Mammary epithelial cell (primary cell): ENCODE measurements at regions of chr10 and their contacts with region 1.

Region 1: GRCh38 chr10:75941223-75941801 is 509.9 kb downstream of the LRMDA start:
- DNase-seq: no peak
- H3K4me3 ChIP-seq: no peak overlapping the region
- H3K27ac ChIP-seq: no peak overlapping the region
- H3K4me1 ChIP-seq: no peaks in the 10 kb centered on the region
- H3K27me3 ChIP-seq: no peaks in the 10 kb centered on the region
- CTCF ChIP-seq: no peak

Region 2: DNA sequence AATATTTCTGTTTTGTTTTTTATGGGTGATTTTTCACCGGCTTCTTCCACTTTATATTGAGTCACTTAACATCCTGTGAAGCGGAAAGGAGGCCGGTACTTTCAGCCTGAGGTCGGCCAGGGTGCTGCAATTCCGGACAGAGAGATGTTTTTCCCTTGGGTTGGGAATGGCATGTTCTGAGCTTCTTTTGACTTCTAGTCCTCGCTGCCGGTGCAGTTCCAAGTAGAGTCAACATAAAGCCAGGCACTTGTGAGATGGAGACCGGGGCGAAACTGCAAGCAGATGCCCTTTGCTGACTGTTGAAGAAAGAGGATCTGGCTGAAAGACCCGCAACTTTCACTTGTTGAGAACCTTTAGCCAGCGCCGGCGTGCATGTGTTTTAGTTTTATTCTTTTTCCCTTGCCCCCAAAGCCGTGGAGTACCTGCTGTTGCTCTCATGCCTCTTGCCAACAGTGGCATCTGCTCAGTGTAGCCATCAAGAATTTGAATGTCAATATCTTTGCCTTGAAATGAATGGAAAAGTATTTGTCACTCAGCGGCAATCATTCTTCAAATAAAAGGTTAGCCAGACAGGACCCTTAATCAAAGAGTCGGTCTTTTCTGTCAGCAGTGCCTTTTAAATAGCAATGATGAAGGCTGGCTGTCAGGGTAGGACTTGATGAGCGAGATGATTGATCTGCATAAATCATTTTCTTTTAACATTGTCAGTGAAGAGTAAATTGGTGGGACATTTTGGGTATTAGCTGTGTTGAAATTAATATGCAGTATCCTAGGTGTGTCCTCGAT is 158.7 kb before region 1 on chr10:
- CTCF ChIA-PET with region 1: no interaction called
- dilution Hi-C with region 1: no loop called
- in situ Hi-C with region 1: no loop called
- intact Hi-C with region 1: no loop called
- DNase-seq: no peak
- H3K4me3 ChIP-seq: no peak overlapping the region
- H3K27ac ChIP-seq: no peak overlapping the region
- H3K4me1 ChIP-seq: no peaks in the 10 kb centered on the region
- H3K27me3 ChIP-seq: no peaks in the 10 kb centered on the region
- CTCF ChIP-seq: no peak

Region 3: DNA sequence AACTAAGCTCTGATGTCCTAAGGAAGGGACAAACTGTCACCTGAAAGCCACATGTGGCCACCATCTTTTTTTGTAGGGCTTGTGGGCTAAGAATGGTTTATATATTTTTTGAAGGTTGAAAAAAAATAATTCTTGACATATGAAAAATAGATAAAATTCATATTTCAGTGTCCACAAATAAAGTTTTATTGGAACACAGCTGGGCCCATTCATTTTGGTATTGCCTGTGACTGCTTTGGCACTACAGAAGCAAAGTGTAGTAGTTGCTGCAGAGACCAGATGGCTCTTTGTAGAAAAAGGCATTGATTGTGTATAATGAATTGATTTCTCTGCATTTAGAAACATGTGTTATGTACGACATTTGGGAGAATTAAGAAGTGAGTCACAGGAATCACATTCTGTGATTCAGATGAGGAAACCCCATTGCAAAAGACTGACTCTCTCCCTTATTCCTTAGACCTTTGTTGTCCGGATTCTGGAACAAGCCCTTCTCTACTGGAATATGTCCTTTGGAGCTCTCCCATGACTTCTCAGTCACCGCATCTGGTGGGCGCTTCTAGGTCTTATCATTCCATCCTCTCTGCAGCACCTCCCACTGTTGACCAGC is 71.2 kb before region 1 on chr10:
- CTCF ChIA-PET with region 1: no interaction called
- dilution Hi-C with region 1: no loop called
- in situ Hi-C with region 1: no loop called
- intact Hi-C with region 1: no loop called
- DNase-seq: peak; percentile 25
- H3K4me3 ChIP-seq: no peak overlapping the region
- H3K27ac ChIP-seq: no peak overlapping the region
- H3K4me1 ChIP-seq: no peaks in the 10 kb centered on the region
- H3K27me3 ChIP-seq: no peaks in the 10 kb centered on the region
- CTCF ChIP-seq: no peak

Region 4: GRCh38 chr10:75904499-75905283 is 36.6 kb before region 1 on chr10:
- CTCF ChIA-PET with region 1: no interaction called
- dilution Hi-C with region 1: loop called (anchors 5 kb)
- in situ Hi-C with region 1: no loop called
- intact Hi-C with region 1: no loop called
- DNase-seq: no peak
- H3K4me3 ChIP-seq: no peak overlapping the region
- H3K27ac ChIP-seq: no peak overlapping the region
- H3K4me1 ChIP-seq: no peaks in the 10 kb centered on the region
- H3K27me3 ChIP-seq: peaks cover 5% of the 10 kb centered on the region
- CTCF ChIP-seq: no peak

Region 5: GRCh38 chr10:76711222-76711997 is 770.1 kb after region 1 on chr10:
- CTCF ChIA-PET with region 1: no interaction called
- dilution Hi-C with region 1: no loop called
- in situ Hi-C with region 1: no loop called
- intact Hi-C with region 1: no loop called
- DNase-seq: no peak
- H3K4me3 ChIP-seq: no peak overlapping the region
- H3K27ac ChIP-seq: no peak overlapping the region
- H3K4me1 ChIP-seq: no peaks in the 10 kb centered on the region
- H3K27me3 ChIP-seq: no peaks in the 10 kb centered on the region
- CTCF ChIP-seq: no peak